Activated CD4-positive, alpha-beta memory T cell treated with anti-CD3 and anti-CD28 coated beads for 36 hours (primary cell): ENCODE measurements at regions of chr11 and their contacts with region 1.

Region 1: GRCh38 chr11:10455637-10456487 is 798 bp downstream of the AMPD3 start:
- DNase-seq: peak; percentile 89
- H3K4me3 Mint-ChIP-seq: peak overlapping the region; percentile 79
- H3K27ac Mint-ChIP-seq: peak overlapping the region; percentile 93
- H3K4me1 Mint-ChIP-seq: peaks cover 83% of the 10 kb centered on the region
- H3K27me3 Mint-ChIP-seq: no peaks in the 10 kb centered on the region

Region 2: GRCh38 chr11:8688414-8689362 is 1767.2 kb before region 1 on chr11:
- CTCF ChIA-PET with region 1: no interaction called
- POLR2A ChIA-PET with region 1: no interaction called
- intact Hi-C with region 1: loop called (anchors 10 kb)
- DNase-seq: peak; percentile 94
- H3K4me3 Mint-ChIP-seq: peak overlapping the region; percentile 97
- H3K27ac Mint-ChIP-seq: peak overlapping the region; percentile 88
- H3K4me1 Mint-ChIP-seq: peaks cover 57% of the 10 kb centered on the region
- H3K27me3 Mint-ChIP-seq: no peaks in the 10 kb centered on the region

Region 3: GRCh38 chr11:9473408-9473807 is 982.5 kb before region 1 on chr11:
- CTCF ChIA-PET with region 1: no interaction called
- POLR2A ChIA-PET with region 1: no interaction called
- intact Hi-C with region 1: no loop called
- DNase-seq: no peak
- H3K4me3 Mint-ChIP-seq: no peak overlapping the region
- H3K27ac Mint-ChIP-seq: no peak overlapping the region
- H3K4me1 Mint-ChIP-seq: peaks cover 2% of the 10 kb centered on the region
- H3K27me3 Mint-ChIP-seq: no peaks in the 10 kb centered on the region

Region 4: DNA sequence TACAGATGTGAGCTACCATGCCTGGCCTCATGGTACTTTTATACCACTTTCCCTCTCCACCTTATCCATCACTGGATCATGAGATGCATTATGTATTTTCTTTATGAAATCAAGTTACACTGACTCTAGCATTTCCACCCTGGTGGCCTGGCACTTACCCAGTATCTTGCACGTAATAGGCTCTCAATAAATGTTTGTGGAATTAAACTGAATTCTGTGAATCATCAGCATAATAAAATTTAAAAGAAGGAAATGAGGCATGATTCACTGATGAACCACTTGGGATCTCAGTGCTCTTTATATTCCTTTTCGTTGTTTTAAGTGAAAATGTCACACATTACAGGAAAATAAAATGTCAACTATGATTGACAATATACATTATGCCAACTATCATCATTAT is 125.9 kb before region 1 on chr11:
- CTCF ChIA-PET with region 1: no interaction called
- POLR2A ChIA-PET with region 1: no interaction called
- intact Hi-C with region 1: no loop called
- DNase-seq: no peak
- H3K4me3 Mint-ChIP-seq: no peak overlapping the region
- H3K27ac Mint-ChIP-seq: no peak overlapping the region
- H3K4me1 Mint-ChIP-seq: no peaks in the 10 kb centered on the region
- H3K27me3 Mint-ChIP-seq: peaks cover 10% of the 10 kb centered on the region

Region 5: GRCh38 chr11:10405855-10406592 is 49.8 kb before region 1 on chr11:
- CTCF ChIA-PET with region 1: interaction called, 11 read pairs
- POLR2A ChIA-PET with region 1: no interaction called
- intact Hi-C with region 1: no loop called
- DNase-seq: peak; percentile 60
- H3K4me3 Mint-ChIP-seq: no peak overlapping the region
- H3K27ac Mint-ChIP-seq: no peak overlapping the region
- H3K4me1 Mint-ChIP-seq: peaks cover 15% of the 10 kb centered on the region
- H3K27me3 Mint-ChIP-seq: no peaks in the 10 kb centered on the region

Region 6: GRCh38 chr11:10490398-10491241 is 34.8 kb after region 1 on chr11:
- CTCF ChIA-PET with region 1: interaction called, 4 read pairs
- POLR2A ChIA-PET with region 1: no interaction called
- intact Hi-C with region 1: loop called (anchors 1 kb)
- DNase-seq: no peak
- H3K4me3 Mint-ChIP-seq: no peak overlapping the region
- H3K27ac Mint-ChIP-seq: peak overlapping the region; percentile 50
- H3K4me1 Mint-ChIP-seq: peaks cover 24% of the 10 kb centered on the region
- H3K27me3 Mint-ChIP-seq: no peaks in the 10 kb centered on the region

Region 7: DNA sequence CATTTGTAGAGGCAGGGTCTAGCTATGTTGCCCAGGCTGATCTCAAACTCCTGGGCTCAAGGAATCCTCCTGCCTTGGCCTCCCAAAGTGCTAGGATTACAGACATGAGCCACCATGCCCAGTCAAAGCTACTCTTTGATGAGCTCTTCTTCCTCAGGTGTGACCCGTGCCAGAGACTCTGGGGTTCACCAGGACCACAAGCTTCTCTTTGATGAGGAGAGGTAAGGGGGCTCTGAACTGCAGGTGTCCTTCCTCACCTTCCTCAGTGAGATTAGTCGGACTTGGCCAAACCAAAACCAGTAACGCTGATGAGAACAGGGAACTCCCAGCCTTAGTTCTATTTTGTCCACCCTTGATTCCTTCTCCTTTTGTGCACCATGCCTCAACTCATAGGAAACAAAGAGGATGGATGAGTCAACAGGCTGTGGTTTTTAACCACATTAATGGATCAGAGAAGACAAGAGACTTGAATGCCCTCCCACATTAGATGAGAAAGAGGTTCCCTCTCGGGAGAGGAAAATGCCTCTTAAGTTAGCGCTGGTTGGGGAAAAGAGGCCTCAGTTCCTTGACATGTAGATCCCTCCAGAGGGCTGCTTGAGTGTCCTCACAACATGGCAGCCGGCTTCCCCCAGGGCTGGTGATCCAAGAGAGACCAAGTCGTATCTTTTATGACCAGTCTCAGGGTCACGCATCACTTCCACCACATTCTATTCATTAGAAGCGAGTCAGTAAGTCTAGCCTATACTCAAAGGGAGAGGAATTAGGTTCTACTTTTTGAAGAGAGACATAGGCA is 269.4 kb after region 1 on chr11:
- CTCF ChIA-PET with region 1: no interaction called
- POLR2A ChIA-PET with region 1: no interaction called
- intact Hi-C with region 1: loop called (anchors 5 kb)
- DNase-seq: peak; percentile 52
- H3K4me3 Mint-ChIP-seq: peak overlapping the region; percentile 9
- H3K27ac Mint-ChIP-seq: peak overlapping the region; percentile 69
- H3K4me1 Mint-ChIP-seq: peaks cover 16% of the 10 kb centered on the region
- H3K27me3 Mint-ChIP-seq: peaks cover 7% of the 10 kb centered on the region

Region 8: GRCh38 chr11:10857709-10858438 is 402.0 kb after region 1 on chr11 and contains the start of gene ZBED5:
- CTCF ChIA-PET with region 1: no interaction called
- POLR2A ChIA-PET with region 1: interaction called, 4 read pairs
- intact Hi-C with region 1: loop called (anchors 5 kb)
- DNase-seq: peak; percentile 98
- H3K4me3 Mint-ChIP-seq: peak within 1 kb of the TSS; percentile 97
- H3K27ac Mint-ChIP-seq: peak within 1 kb of the TSS; percentile 99
- H3K4me1 Mint-ChIP-seq: peaks cover 33% of the 10 kb centered on the region
- H3K27me3 Mint-ChIP-seq: no peaks in the 10 kb centered on the region
- total RNA-seq, gene ZBED5: 39.8 to 43.3 TPM